A549 (cell line): ENCODE measurements at regions of chr15 and their contacts with region 1.

Region 1: GRCh38 chr15:89321521-89322410 is 12.9 kb downstream of the POLG start:
- DNase-seq: no peak
- ATAC-seq: peak; percentile 45 to 53; a peak in 4 of 6 replicates
- H3K4me3 ChIP-seq: no peak overlapping the region
- H3K27ac ChIP-seq: no peak overlapping the region
- H3K4me1 ChIP-seq: no peaks in the 10 kb centered on the region
- CTCF ChIP-seq: no peak
- EP300 ChIP-seq: no peak
- POLR2A ChIP-seq: no peak
- RAD21 ChIP-seq: no peak

Region 2: GRCh38 chr15:89278307-89278706 is 43.5 kb before region 1 on chr15:
- CTCF ChIA-PET with region 1: no interaction called
- POLR2A ChIA-PET with region 1: no interaction called
- DNase-seq: no peak
- ATAC-seq: no peak
- H3K4me3 ChIP-seq: no peak overlapping the region
- H3K27ac ChIP-seq: no peak overlapping the region
- H3K4me1 ChIP-seq: no peaks in the 10 kb centered on the region
- CTCF ChIP-seq: no peak
- EP300 ChIP-seq: no peak
- POLR2A ChIP-seq: no peak
- RAD21 ChIP-seq: no peak

Region 3: GRCh38 chr15:89307046-89307587 is 14.6 kb before region 1 on chr15:
- CTCF ChIA-PET with region 1: interaction called, 10 read pairs
- POLR2A ChIA-PET with region 1: interaction called, 3 read pairs
- DNase-seq: no peak
- ATAC-seq: peak; percentile 19 to 53; a peak in 3 of 6 replicates
- H3K4me3 ChIP-seq: no peak overlapping the region
- H3K27ac ChIP-seq: peak overlapping the region; percentile 28 to 51; a peak in 4 of 6 replicates
- H3K4me1 ChIP-seq: peaks cover 14% of the 10 kb centered on the region
- CTCF ChIP-seq: no peak
- EP300 ChIP-seq: no peak
- POLR2A ChIP-seq: no peak
- RAD21 ChIP-seq: no peak

Region 4: GRCh38 chr15:89334510-89335288 is 12.9 kb after region 1 on chr15 and contains the start of gene POLG:
- CTCF ChIA-PET with region 1: interaction called, 78 read pairs
- POLR2A ChIA-PET with region 1: interaction called, 6 read pairs
- DNase-seq: peak; percentile 96 to 100
- ATAC-seq: peak; percentile 80 to 94
- H3K4me3 ChIP-seq: peak within 1 kb of the TSS; percentile 68
- H3K27ac ChIP-seq: peak within 1 kb of the TSS; percentile 89 to 95
- H3K4me1 ChIP-seq: peaks cover 37% of the 10 kb centered on the region
- CTCF ChIP-seq: no peak
- EP300 ChIP-seq: no peak
- POLR2A ChIP-seq: peak; percentile 99
- RAD21 ChIP-seq: no peak
- polyA plus RNA-seq, gene POLG: 24.1 and 34.0 TPM in 2 replicates

Region 5: GRCh38 chr15:89462331-89462912 is 140.7 kb after region 1 on chr15:
- CTCF ChIA-PET with region 1: no interaction called
- POLR2A ChIA-PET with region 1: no interaction called
- DNase-seq: peak in 1 of 2 experiments; percentile 65
- ATAC-seq: peak in 1 of 2 experiments; percentile 73; a peak in 3 of 6 replicates
- H3K4me3 ChIP-seq: no peak overlapping the region
- H3K27ac ChIP-seq: no peak overlapping the region
- H3K4me1 ChIP-seq: peaks cover 11% of the 10 kb centered on the region; the same call in 2 of the 3 replicates
- CTCF ChIP-seq: no peak
- EP300 ChIP-seq: no peak
- POLR2A ChIP-seq: no peak
- RAD21 ChIP-seq: no peak